ENCODE measurements at regions of chr20 and their contacts with region 1.

Region 1: DNA sequence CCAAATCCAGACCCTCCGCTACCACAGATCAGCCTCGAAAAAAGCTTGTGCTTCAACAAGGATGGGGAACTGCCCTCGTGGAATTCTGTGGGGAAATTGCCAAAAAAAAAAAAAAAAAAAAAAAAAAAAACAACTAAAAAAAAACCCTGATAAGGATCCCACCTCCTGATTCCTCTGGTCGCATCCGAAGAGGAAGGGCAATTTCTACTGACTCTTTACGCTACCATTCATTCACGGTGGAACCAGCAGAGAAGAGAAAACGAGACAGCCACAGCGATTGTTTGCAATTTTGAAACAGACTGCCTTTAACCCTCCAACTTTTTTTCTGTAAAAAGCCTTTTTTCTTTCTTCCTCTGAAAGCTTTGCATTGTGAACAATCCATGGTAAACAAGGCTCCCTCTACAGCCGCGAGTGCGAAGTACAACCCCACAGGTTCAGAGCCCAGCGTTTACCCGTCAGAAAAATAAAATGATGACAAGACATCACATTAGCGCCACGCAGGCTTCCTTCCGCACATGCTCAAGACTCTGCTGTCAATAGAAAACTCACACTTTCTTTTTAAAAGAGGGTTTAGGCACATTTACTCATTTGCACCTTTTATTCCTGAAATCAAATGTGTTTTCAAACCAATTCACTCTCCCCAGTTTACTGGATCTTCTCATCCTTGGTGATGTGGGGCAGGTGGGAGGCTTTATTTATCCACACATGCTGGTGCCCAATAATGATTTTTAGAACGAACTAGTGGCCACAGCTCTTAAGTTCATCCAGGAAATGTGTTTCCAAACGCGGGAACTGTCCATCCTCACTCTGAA is 100.0 kb downstream of the NOL4L start:
- DNase-seq: peak; percentile 83
- ATAC-seq: peak; percentile 40
- H3K4me3 ChIP-seq: peak overlapping the region; percentile 54
- H3K27ac ChIP-seq: peak overlapping the region; percentile 68
- H3K4me1 ChIP-seq: peaks cover 7% of the 10 kb centered on the region; the same call in 1 of the 2 replicates
- H3K27me3 ChIP-seq: no peaks in the 10 kb centered on the region; the same call in 1 of the 2 replicates
- CTCF ChIP-seq: peak; percentile 85
- POLR2A ChIP-seq: no peak
- RAD21 ChIP-seq: peak; percentile 70

Region 2: GRCh38 chr20:31835977-31836852 is 648.9 kb before region 1 on chr20:
- CTCF ChIA-PET with region 1: no interaction called
- POLR2A ChIA-PET with region 1: no interaction called
- dilution Hi-C with region 1: no loop called
- in situ Hi-C with region 1: loop called (anchors 25 kb)
- intact Hi-C with region 1: no loop called
- DNase-seq: peak; percentile 92
- ATAC-seq: peak; percentile 88
- H3K4me3 ChIP-seq: no peak overlapping the region
- H3K27ac ChIP-seq: no peak overlapping the region
- H3K4me1 ChIP-seq: peaks cover 15% of the 10 kb centered on the region
- H3K27me3 ChIP-seq: peaks cover 3% of the 10 kb centered on the region; the same call in 1 of the 2 replicates
- CTCF ChIP-seq: no peak
- POLR2A ChIP-seq: no peak
- RAD21 ChIP-seq: no peak

Region 3: GRCh38 chr20:32336918-32337347 is 148.2 kb before region 1 on chr20:
- CTCF ChIA-PET with region 1: no interaction called
- POLR2A ChIA-PET with region 1: no interaction called
- dilution Hi-C with region 1: no loop called
- in situ Hi-C with region 1: no loop called
- intact Hi-C with region 1: loop called (anchors 1 kb)
- DNase-seq: peak; percentile 54
- ATAC-seq: peak; percentile 91
- H3K4me3 ChIP-seq: no peak overlapping the region
- H3K27ac ChIP-seq: no peak overlapping the region
- H3K4me1 ChIP-seq: peaks cover 4% of the 10 kb centered on the region
- H3K27me3 ChIP-seq: no peaks in the 10 kb centered on the region
- CTCF ChIP-seq: peak; percentile 69
- POLR2A ChIP-seq: no peak
- RAD21 ChIP-seq: peak; percentile 72

Region 4: DNA sequence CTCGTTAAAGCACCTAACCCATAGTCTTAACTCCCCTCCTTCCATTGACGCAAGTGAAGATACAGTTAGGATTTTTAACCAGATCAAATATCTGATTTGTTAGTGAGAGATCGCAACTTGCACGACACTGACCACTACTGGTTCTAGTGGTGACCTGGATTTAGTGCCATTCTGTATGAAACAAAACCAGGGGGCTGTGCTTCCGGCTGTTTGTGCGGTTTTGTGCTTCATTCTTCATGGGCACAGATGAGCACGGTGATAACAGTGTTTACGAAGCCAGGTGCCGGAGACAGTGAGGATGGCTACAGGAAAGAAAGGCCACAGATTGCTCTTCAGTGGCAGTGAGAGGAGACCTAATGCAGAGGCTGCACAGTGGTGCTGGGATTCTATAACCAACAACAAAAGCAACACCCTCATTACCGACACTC is 24.5 kb after region 1 on chr20:
- CTCF ChIA-PET with region 1: no interaction called
- POLR2A ChIA-PET with region 1: interaction called, 11 read pairs
- dilution Hi-C with region 1: no loop called
- in situ Hi-C with region 1: no loop called
- intact Hi-C with region 1: no loop called
- DNase-seq: peak; percentile 54
- ATAC-seq: peak; percentile 70
- H3K4me3 ChIP-seq: no peak overlapping the region
- H3K27ac ChIP-seq: no peak overlapping the region
- H3K4me1 ChIP-seq: peaks cover 4% of the 10 kb centered on the region; the same call in 1 of the 2 replicates
- H3K27me3 ChIP-seq: no peaks in the 10 kb centered on the region
- CTCF ChIP-seq: peak; percentile 34
- POLR2A ChIP-seq: no peak
- RAD21 ChIP-seq: peak; percentile 34; the same call in 1 of the 2 replicates

Measured in IMR-90 (cell line).